ENCODE measurements at regions of chr2 and their contacts with region 1.

Region 1: GRCh38 chr2:85935746-85936208 is 47.0 kb upstream of the ST3GAL5 start:
- DNase-seq: peak; percentile 54
- H3K4me3 ChIP-seq: no peak overlapping the region
- H3K27ac ChIP-seq: peak overlapping the region; percentile 41
- H3K4me1 ChIP-seq: peaks cover 26% of the 10 kb centered on the region
- H3K27me3 ChIP-seq: no peaks in the 10 kb centered on the region
- CTCF ChIP-seq: no peak

Region 2: DNA sequence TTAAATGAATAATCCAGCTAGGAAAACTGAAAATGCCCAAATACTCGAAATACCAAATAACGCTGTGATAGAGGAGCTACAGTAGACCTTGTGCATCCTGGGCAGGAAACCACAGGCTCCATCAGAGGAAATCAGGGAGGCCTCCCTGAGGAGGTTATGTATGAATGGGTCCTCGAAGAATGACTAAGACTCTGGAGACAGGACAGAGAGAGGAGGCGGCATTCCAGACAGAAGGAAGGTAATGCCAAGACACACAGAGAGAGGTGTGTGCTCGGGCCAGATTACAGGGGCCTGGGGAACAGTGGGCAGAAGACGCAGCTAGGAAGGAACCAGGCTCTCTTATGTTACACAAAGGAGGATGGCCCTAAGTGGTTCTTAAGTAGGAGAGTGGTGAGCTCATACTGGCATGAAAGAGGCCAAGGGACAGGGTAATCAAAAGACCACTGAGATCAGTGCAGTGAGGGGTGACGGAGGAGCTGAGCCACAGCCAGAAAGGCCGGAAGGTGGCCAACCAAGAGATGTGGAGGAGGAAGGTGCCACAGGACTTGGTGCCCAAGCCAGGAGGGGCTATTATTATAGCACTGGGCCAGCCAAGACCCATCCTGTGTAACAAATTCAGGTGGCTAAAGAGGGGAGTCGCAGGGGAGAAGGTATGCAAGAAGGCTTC is 56.9 kb before region 1 on chr2:
- CTCF ChIA-PET with region 1: no interaction called
- dilution Hi-C with region 1: no loop called
- in situ Hi-C with region 1: no loop called
- intact Hi-C with region 1: no loop called
- DNase-seq: no peak
- H3K4me3 ChIP-seq: no peak overlapping the region
- H3K27ac ChIP-seq: no peak overlapping the region
- H3K4me1 ChIP-seq: peaks cover 8% of the 10 kb centered on the region
- H3K27me3 ChIP-seq: no peaks in the 10 kb centered on the region
- CTCF ChIP-seq: no peak

Region 3: DNA sequence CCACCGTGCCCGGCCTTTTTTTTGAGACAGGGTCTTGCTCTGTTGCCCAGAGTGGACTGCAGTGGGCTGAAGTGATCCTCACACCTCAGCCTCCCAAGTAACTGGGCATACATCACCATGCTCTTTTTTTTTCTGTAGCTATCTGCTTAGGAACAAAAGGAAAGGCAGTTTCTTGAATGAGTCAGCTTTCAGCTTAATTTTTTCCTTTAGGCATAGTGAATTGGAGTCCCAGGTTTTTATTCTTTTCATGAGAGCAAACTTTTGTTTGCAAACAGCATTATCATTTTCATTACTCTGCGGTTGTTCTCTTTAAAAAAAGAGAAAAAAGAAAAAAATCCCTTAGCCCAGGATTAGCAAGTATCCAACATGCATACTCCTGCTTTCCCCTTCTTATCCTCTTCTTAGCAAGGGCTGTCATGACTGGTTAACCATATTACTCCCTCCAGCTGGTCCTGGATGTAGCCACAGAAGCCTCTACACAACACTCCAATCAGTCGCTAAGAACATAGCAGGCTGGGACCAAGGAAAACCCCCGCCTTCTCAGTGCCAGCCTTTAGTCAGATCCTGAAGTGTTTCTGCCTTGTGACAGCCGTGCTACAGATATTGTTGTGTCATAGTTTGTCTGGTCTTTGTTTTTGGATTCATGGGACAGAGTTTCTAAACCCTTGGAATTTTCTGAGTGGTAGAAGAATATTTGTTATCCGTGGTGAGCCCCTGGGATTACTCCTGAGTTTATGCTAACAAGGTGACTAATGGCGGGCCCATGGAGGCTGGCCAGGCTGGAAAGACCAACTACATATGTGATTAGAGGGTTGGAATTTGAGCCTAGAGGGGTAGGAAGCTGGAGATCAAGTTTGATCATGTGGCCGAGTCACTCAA is 23.7 kb before region 1 on chr2:
- CTCF ChIA-PET with region 1: interaction called, 22 read pairs
- dilution Hi-C with region 1: no loop called
- in situ Hi-C with region 1: no loop called
- intact Hi-C with region 1: no loop called
- DNase-seq: peak; percentile 94
- H3K4me3 ChIP-seq: no peak overlapping the region
- H3K27ac ChIP-seq: peak overlapping the region; percentile 94
- H3K4me1 ChIP-seq: peaks cover 33% of the 10 kb centered on the region
- H3K27me3 ChIP-seq: no peaks in the 10 kb centered on the region
- CTCF ChIP-seq: no peak

Region 4: DNA sequence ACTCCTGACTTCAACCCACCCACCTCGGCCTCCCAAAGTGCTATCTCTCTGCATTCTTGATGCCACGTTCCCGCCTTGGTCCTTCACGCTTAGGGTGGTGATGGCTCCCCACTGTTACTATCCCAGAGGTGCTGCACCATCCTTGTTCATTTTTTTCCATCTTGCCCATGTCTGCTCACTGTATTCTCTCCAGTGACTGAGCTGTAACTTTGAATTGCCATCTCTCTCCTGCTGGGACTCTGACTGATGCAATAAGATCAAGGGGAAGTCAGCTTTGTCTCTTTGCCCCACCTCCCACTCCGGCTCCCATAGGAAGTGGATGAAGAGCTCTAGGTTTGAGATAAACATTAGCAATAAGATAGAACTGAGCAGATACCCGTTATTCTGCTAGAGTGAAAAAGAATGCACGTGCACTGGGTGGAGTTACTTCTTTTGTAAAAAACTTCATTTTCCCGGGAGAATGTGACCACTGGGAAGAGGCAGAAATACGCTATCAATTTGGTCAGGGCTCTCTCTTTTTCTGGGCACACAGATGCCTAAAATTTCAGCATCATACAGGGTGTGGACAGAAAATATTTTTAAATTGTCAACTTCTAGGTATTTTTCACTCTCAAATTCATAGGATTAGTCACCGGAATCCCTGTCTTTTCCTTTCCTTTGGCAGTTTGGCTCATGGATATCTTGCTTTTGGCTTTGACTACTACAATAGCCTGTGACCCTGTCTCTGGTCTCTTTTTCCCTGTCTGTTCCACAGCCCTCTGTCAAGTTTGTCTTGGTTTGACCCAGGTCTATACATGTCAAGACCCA is 64.6 kb after region 1 on chr2:
- CTCF ChIA-PET with region 1: no interaction called
- dilution Hi-C with region 1: no loop called
- in situ Hi-C with region 1: no loop called
- intact Hi-C with region 1: no loop called
- DNase-seq: no peak
- H3K4me3 ChIP-seq: no peak overlapping the region
- H3K27ac ChIP-seq: no peak overlapping the region
- H3K4me1 ChIP-seq: no peaks in the 10 kb centered on the region
- H3K27me3 ChIP-seq: no peaks in the 10 kb centered on the region
- CTCF ChIP-seq: no peak